ENCODE measurements at regions of chr12 and their contacts with region 1.

Region 1: DNA sequence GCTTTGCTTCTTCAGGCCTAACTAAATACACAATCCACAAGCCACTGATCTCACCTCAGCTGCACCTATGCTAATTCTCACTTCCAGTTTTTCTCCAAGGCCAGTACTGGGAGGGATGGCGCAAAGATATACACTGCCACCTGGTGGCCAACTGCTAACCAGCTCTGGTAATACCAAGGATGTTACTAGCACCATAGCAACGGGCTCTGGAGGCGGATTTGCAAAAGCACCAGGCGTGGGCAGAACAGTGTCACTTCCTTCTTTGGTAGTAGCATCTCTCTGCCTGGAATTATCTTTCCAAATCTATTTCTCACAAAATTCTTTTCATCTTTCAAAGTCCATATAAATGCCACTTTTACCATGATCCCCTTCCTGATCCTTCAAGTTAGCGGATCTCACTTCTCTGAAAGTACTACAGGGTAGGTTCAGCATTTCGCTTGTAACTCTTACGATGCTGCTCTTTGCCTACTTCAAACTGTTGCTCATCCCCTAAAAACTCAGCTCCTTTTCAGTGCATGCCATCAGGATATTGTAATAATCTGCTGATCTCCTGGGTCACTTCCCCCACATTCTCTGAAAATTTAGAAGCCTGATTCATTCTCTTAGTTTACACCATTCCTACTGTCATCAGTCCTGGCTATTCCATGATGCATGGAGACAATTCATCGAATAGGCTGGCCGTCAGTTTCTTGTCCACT is 37.1 kb upstream of the FOXJ2 start:
- DNase-seq: peak; percentile 90 to 91
- H3K4me3 ChIP-seq: no peak overlapping the region
- H3K4me3 Mint-ChIP-seq: no peak overlapping the region
- H3K27ac Mint-ChIP-seq: no peak overlapping the region
- H3K4me1 ChIP-seq: peaks cover 46% of the 10 kb centered on the region
- H3K4me1 Mint-ChIP-seq: peaks cover 13% of the 10 kb centered on the region
- H3K27me3 ChIP-seq: no peaks in the 10 kb centered on the region
- H3K27me3 Mint-ChIP-seq: no peaks in the 10 kb centered on the region
- CTCF ChIP-seq: peak; percentile 73 to 94

Region 2: DNA sequence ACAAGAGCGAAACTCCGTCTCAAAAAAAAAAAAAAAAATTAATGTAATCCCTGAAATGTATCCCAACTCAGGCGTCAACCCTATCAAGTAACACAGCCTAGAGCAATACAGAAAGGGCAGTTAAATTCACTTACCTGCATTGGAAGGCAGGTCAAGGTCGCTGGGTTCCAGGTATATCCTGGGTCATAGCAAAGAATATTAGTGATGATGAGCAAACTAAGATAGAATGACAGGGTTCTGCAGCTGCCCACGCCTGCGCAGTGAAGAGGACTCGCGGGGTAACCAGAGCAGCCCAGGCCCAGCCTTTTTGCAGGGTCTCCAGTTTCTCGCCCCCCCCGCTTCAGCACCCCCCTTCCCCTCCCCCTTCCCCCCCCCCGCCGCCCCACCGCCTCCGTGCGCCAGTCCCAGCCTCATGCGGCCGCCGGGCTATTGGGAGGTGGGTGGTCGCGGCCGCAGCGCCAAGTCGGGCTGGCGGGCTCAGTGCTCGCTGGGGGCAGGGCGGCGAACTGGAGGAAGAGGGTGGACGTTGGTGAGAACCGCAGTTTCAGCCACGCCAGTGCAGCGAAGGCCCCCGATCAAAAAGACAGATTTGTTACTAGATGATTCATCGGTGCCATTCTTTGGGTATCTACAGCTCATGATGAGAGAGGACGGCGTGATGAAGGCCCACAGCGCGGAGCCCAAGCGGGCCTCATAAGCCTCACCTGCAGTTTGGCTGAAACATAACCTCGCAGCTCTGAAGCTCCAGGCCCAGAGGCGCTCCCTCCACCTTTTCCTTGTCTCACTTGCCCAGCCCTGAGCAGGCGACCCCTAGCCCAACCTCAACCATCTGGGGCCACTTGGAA is 79.6 kb before region 1 on chr12:
- CTCF ChIA-PET with region 1: no interaction called
- POLR2A ChIA-PET with region 1: no interaction called
- intact Hi-C with region 1: loop called (anchors 5 kb)
- DNase-seq: peak; percentile 62 to 78
- H3K4me3 ChIP-seq: no peak overlapping the region
- H3K4me3 Mint-ChIP-seq: peak overlapping the region; percentile 43
- H3K27ac Mint-ChIP-seq: peak overlapping the region; percentile 73
- H3K4me1 ChIP-seq: peaks cover 15% of the 10 kb centered on the region
- H3K4me1 Mint-ChIP-seq: peaks cover 62% of the 10 kb centered on the region
- H3K27me3 ChIP-seq: no peaks in the 10 kb centered on the region
- H3K27me3 Mint-ChIP-seq: peaks cover 3% of the 10 kb centered on the region
- CTCF ChIP-seq: no peak

Region 3: DNA sequence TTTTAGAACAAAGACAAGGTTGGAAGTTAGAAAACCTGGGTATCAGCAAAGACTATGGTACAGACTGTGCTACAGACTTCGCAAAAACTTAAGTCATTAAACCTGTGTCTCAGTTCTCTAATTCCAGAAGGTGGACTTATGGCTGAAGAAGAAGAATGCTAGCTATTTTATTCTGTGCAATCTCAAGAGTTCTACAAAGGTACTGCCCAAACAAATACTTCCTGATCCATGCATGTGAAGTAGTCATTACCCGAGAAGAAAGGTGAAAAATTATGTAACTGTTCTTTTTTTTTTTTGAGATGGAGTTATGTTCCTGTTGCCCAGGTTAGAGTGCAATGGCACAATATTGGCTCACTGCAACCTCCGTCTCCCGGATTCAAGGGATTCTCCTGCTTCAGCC is 14.0 kb before region 1 on chr12:
- CTCF ChIA-PET with region 1: interaction called, 5 read pairs
- POLR2A ChIA-PET with region 1: interaction called, 5 read pairs
- intact Hi-C with region 1: loop called (anchors 1 kb)
- DNase-seq: peak; percentile 67 to 68
- H3K4me3 ChIP-seq: no peak overlapping the region
- H3K4me3 Mint-ChIP-seq: peak overlapping the region; percentile 49
- H3K27ac Mint-ChIP-seq: peak overlapping the region; percentile 93
- H3K4me1 ChIP-seq: peaks cover 78% of the 10 kb centered on the region
- H3K4me1 Mint-ChIP-seq: peaks cover 69% of the 10 kb centered on the region
- H3K27me3 ChIP-seq: no peaks in the 10 kb centered on the region
- H3K27me3 Mint-ChIP-seq: no peaks in the 10 kb centered on the region
- CTCF ChIP-seq: no peak